Heart left ventricle (tissue), 16 donors: ENCODE measurements at regions of chr5 and their contacts with region 1.

Region 1: GRCh38 chr5:149828161-149828884 is 98.2 kb downstream of the PPARGC1B start:
- DNase-seq: peak; percentile 83 to 90 (median 86)
- ATAC-seq: peak; percentile 43 to 75 (median 62)
- H3K4me3 ChIP-seq: no peak overlapping the region
- H3K27ac ChIP-seq: peak overlapping the region in 11 of 12 donors; percentile 57 to 92 (median 84)
- H3K4me1 ChIP-seq: peaks cover 21 to 66% (median 50%) of the 10 kb centered on the region in 12 donors
- H3K27me3 ChIP-seq: no peaks in the 10 kb centered on the region
- CTCF ChIP-seq: peak; percentile 83 to 95 (median 90)
- POLR2A ChIP-seq: no peak

Region 2: GRCh38 chr5:148922606-148923005 is 905.7 kb before region 1 on chr5:
- intact Hi-C with region 1: no loop called
- DNase-seq: no peak
- ATAC-seq: no peak
- H3K4me3 ChIP-seq: no peak overlapping the region
- H3K27ac ChIP-seq: no peak overlapping the region
- H3K4me1 ChIP-seq: peaks cover 0 to 10% (median 2%) of the 10 kb centered on the region in 12 donors
- H3K27me3 ChIP-seq: no peaks in the 10 kb centered on the region
- CTCF ChIP-seq: no peak
- POLR2A ChIP-seq: no peak

Region 3: DNA sequence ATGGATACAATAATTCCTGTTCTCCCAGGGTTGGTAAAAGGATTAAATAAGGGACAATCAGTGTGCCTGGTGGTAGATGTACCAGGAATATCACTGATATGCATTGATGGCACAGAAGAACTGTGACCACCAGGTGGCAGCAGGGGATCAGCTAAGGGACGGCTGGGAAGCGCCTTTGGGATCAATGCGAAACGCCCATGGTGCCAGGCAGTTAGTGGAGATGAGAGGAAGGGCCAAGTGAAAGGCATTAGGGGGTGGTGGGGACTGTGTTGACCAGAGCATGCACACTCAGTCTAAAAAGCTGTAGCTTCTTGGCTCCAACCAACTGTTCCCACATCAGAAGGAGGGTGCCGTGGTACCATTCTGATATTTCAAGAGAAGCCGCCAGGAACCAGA is 191.5 kb before region 1 on chr5:
- intact Hi-C with region 1: loop called (anchors 1 to 5 kb)
- DNase-seq: peak in 3 of 5 donors; percentile 87 to 93 (median 92)
- ATAC-seq: peak; percentile 51 to 68 (median 64)
- H3K4me3 ChIP-seq: no peak overlapping the region
- H3K27ac ChIP-seq: no peak overlapping the region
- H3K4me1 ChIP-seq: peaks cover 0 to 38% (median 27%) of the 10 kb centered on the region in 12 donors
- H3K27me3 ChIP-seq: no peaks in the 10 kb centered on the region
- CTCF ChIP-seq: peak; percentile 62 to 94 (median 84)
- POLR2A ChIP-seq: no peak

Region 4: GRCh38 chr5:149667084-149667828 is 161.1 kb before region 1 on chr5:
- intact Hi-C with region 1: loop called in 3 of 10 experiments (anchors 1 to 5 kb)
- DNase-seq: peak in 1 of 5 donors; percentile 32
- ATAC-seq: peak; percentile 49 to 61 (median 56)
- H3K4me3 ChIP-seq: no peak overlapping the region
- H3K27ac ChIP-seq: peak overlapping the region in 9 of 12 donors; percentile 32 to 79 (median 67)
- H3K4me1 ChIP-seq: peaks cover 0 to 32% (median 15%) of the 10 kb centered on the region in 12 donors
- H3K27me3 ChIP-seq: no peaks in the 10 kb centered on the region
- CTCF ChIP-seq: peak; percentile 69 to 91 (median 84)
- POLR2A ChIP-seq: no peak

Region 5: GRCh38 chr5:149759986-149760853 is 68.1 kb before region 1 on chr5:
- intact Hi-C with region 1: loop called in 5 of 10 experiments (anchors 1 to 10 kb)
- DNase-seq: peak in 1 of 5 donors; percentile 61
- ATAC-seq: peak; percentile 59 to 89 (median 72)
- H3K4me3 ChIP-seq: no peak overlapping the region
- H3K27ac ChIP-seq: peak overlapping the region in 6 of 12 donors; percentile 18 to 60 (median 40)
- H3K4me1 ChIP-seq: peaks cover 0 to 85% (median 26%) of the 10 kb centered on the region in 12 donors
- H3K27me3 ChIP-seq: no peaks in the 10 kb centered on the region
- CTCF ChIP-seq: peak in 8 of 12 donors; percentile 17 to 51 (median 36)
- POLR2A ChIP-seq: no peak

Region 6: DNA sequence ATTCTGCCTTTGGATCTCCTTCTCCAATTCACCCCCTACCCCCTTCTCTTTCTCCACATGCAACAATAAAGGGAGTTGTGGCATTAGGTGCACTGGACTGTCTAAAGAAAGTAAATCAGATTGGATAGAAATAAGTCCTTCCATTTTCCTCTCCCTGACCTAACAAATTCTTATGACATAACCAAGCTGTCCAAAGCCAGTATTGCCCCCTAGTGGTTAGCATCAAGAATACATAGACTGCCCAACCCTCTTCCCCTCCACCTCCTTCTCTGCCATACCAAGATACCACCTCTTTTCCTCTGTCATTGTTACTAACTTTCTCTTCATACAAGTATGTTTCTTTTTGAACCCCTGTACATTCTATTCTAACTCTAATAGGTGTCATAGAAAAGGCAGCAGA is 52.5 kb before region 1 on chr5:
- intact Hi-C with region 1: loop called in 6 of 10 experiments (anchors 2 to 10 kb)
- DNase-seq: no peak
- ATAC-seq: no peak
- H3K4me3 ChIP-seq: no peak overlapping the region
- H3K27ac ChIP-seq: peak overlapping the region in 9 of 12 donors; percentile 55 to 87 (median 71)
- H3K4me1 ChIP-seq: peaks cover 9 to 96% (median 82%) of the 10 kb centered on the region in 12 donors
- H3K27me3 ChIP-seq: no peaks in the 10 kb centered on the region
- CTCF ChIP-seq: peak in 10 of 12 donors; percentile 24 to 51 (median 35)
- POLR2A ChIP-seq: no peak